Dorsolateral prefrontal cortex (tissue), 120 donors: ENCODE measurements at regions of chr15 and their contacts with region 1.

Region 1: DNA sequence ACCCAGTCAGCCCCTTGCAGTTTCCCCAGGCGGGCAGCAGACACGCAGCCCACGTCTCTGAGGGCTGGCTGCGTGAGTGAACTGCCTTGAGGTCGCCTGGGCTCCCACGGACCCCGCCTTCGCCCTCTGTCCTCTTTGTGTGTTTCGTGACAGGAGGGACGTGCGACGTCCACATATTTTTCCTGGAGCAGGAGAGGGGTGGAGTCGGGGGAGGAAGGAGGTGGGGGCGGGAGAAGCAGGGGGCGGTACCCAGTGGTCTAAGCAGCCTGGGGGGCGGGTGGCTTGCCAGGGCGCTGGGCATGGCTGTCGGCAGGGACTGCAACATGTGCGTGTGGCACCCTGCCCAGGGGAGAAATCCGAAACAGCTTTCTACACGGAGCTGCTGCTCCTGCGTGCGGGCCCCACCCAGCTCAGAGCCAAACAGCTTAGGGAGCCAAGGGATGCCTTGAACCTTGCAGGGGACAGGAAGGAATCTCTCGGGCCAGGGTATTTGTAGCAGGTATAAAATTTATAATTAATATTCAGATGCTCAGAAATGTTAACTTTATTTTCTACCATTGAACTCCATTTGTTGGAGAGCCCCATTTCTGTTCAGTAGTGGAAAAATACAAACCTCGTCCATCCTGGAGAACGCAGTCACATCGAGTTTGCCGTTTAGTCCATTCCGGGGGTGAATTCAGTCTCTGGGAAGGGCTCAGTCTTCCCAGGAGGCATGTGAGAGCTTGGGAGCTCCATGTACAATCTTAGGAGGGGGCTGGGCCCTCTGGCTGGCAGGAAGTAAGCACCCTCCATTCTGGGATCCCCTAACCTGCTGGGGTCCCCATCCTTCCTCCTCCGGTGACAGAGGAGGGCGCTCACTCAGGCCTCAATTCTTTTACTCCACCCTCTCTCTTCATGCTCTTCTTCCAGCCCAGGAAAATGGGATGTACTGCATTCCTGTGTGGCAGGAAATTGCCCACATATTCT is 79.1 kb upstream of the MEF2A start:
- DNase-seq: peak; percentile 45 to 87 (median 70)
- H3K4me3 ChIP-seq: peak overlapping the region; percentile 3 to 70 (median 50)
- H3K27ac ChIP-seq: peak overlapping the region in 53 of 59 donors; percentile 5 to 87 (median 67)
- H3K27me3 ChIP-seq: no peaks in the 10 kb centered on the region
- CTCF ChIP-seq: no peak

Region 2: DNA sequence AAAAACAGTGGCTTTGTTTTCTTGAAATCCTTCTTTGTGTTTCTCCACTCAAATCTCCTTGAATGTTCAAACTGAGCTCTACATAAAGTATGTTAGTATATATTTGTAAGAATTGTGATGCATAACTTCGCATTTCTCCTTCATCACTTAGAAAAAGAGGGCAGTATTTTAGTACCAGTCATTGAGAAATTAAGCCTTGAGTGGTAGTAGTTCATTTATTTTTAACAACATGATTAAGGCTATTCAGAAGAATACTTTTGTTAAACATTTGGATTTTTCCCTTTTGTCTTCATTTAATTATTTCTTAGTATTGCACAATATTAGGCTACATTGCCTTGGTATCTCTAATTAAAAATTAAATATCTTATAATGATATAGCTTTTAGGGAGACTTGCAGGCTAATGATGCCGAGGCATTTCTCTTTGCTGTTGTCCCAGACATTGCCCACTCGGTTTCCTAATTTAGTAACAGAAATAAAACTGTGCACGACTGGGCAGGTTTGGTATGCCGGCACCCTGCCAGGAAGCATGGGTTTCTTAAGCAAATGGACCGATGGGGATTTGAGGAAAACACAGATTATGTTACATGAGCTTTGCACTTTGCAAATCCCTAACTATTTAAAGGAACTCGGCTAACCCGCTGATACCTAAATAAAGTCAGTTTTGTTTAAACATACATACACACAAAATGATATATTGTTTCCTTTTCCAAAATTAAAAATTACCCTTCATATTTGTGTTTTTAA is 180.7 kb before region 1 on chr15:
- intact Hi-C with region 1: no loop called
- DNase-seq: peak in 1 of 10 donors; percentile 48
- H3K4me3 ChIP-seq: peak overlapping the region in 29 of 59 donors; percentile 0 to 51 (median 21)
- H3K27ac ChIP-seq: no peak overlapping the region
- H3K27me3 ChIP-seq: no peaks in the 10 kb centered on the region
- CTCF ChIP-seq: no peak

Region 3: DNA sequence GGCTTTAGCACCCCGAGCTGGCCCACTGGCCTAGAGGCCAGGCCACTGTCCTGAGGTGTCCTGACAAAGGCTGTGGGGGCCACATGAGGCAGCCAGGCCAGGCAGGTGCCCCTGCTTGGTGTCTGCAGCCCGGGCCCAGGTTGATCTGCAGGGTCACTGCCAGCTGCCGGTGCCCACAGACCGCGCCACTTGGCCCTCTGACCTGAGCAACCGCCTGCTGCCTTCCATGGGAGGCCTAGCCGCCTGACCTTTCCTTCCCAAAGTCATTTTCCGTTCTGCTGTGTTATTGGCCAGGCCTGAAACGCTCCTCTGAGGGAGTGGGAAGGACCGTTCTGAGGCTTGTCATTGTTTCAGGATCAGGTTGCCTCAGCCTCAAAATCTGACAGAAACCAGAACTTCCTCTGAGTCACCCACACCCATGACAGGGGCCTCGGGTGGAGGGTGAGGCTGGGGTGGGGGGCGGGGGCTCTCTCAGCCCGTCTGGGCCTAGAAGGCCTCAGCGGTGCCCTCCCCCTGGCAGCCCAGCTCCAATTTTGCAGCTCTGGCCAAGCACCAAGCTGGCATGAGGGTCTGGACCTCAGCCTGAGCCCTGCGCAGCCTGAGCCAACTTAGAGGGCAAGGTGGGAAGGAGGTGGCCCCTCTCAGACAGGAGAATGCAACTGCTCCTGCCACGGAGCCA is 61.5 kb before region 1 on chr15:
- intact Hi-C with region 1: loop called in 1 of 2 experiments (anchors 10 kb)
- DNase-seq: peak in 5 of 10 donors; percentile 7 to 37 (median 23)
- H3K4me3 ChIP-seq: no peak overlapping the region
- H3K27ac ChIP-seq: peak overlapping the region in 48 of 59 donors; percentile 15 to 81 (median 65)
- H3K27me3 ChIP-seq: no peaks in the 10 kb centered on the region
- CTCF ChIP-seq: no peak

Region 4: DNA sequence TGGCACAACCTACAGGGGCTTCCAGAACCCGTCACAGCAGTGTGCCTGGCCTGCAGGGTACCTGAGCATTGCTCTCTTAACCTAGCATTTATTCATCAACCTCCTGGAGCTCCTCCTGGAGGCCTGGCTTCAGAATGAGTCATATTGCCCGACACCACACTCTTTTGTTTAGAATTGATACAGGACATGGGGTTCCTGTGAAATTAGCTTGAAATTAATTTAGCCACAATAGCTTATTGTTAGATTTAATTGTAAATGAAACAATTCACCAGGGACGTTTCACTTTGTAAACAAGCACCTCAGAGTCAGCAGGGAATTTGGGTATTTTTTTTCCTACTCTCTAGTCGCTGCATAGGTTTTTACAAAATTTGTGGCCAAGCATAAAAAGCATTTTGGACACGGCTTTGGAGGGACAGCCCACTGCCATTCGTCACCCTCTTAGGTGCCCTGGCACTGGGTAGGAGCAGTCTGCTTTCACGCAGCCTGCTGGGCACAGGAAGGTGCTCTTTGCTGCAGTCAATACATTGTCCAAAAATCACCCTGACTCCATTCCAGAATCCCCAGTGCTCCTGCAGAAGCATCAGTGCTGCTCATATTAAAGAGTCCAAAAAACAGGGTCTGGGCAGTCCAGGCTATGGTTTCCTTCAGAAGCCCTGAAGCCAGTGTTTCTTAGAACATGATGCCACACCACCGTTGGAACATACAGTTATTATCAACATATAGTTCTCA is 18.3 kb after region 1 on chr15:
- intact Hi-C with region 1: no loop called
- DNase-seq: peak in 1 of 10 donors; percentile 37
- H3K4me3 ChIP-seq: no peak overlapping the region
- H3K27ac ChIP-seq: peak overlapping the region in 9 of 59 donors; percentile 2 to 47 (median 16)
- H3K27me3 ChIP-seq: no peaks in the 10 kb centered on the region
- CTCF ChIP-seq: no peak